Right ventricle myocardium inferior (tissue), 1 donor: ENCODE measurements at regions of chr2 and their contacts with region 1.

Region 1: DNA sequence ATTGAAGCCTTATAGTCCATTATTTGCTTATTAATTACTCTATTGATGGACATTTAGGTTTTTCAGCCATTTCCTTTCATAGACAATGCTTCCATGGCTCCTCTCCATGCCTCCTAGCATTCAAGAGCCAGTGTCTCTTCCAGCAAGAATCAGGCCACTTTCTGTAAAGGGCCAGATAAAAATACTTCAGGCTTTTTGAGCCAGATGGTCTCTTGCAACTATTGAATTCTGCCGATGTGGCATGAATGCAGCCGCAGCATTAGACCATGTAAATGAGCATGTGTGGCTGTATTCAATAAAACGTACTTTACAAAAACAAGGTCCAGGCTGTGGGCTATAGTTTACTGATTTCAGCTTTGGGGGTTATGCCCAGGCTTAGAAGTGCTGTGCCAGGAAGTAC is 38.5 kb downstream of the TRAF3IP1 start:
- DNase-seq: no peak
- ATAC-seq: no peak

Region 2: GRCh38 chr2:237987268-237987667 is 371.5 kb before region 1 on chr2:
- intact Hi-C with region 1: no loop called
- DNase-seq: no peak
- ATAC-seq: no peak

Region 3: DNA sequence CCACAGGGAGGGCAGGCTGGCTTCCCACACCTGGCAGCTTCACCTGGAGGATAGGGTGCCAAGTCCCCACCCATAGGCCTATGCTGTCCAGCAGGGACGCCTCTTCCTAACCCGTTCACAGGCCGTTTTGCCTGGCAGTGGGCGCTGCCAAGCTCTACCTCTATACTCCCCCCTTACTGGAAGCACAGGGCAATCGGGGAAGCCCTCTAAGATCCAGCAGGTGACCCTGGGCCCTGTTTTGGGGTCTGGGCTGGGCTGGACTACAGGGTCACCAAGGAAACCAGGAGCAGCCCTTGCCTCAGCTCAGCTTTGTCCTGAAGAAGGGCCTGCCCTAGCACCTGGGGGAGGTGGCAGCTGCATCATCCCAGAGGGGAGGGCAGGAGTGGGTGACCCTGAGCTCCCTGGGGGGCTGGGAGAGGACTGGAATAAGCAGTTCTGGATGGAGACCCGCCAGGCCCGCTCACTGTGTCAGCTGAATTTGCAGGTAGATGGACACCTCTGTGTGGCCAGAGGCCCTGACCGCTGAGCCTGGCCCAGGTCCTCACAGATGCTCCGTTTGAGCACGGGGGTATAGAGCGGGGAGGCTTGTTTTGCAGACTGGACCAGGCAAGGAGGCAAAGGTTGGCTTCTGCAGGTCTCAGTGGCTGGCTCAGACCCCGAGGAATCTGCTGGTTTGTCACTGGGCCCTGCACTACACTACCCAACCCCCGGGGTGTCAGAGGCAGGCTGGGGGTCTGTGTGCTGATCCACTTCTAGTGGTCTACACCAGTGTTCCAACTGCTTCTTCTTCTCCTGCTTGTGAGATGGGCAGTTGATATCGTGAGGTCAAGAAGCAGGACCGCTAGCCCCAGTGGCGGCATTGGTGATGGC is 231.1 kb after region 1 on chr2:
- intact Hi-C with region 1: no loop called
- DNase-seq: no peak
- ATAC-seq: no peak

Region 4: GRCh38 chr2:238970553-238971081 is 611.8 kb after region 1 on chr2:
- intact Hi-C with region 1: loop called (anchors 5 kb)
- DNase-seq: peak; percentile 82
- ATAC-seq: peak; percentile 63